Activated CD4-positive, alpha-beta T cell treated with anti-CD3 and anti-CD28 coated beads, Interleukin-2, amount 10 ng/mL, durations not matched to agents 7 days and 5 days (primary cell): ENCODE measurements at regions of chr19 and their contacts with region 1.

Region 1: GRCh38 chr19:55301459-55302317 is 17.9 kb downstream of the BRSK1 start:
- DNase-seq: peak; percentile 95
- H3K4me3 Mint-ChIP-seq: peak overlapping the region; percentile 91
- H3K27ac Mint-ChIP-seq: peak overlapping the region; percentile 94
- H3K4me1 Mint-ChIP-seq: peaks cover 15% of the 10 kb centered on the region
- H3K27me3 Mint-ChIP-seq: peaks cover 3% of the 10 kb centered on the region

Region 2: GRCh38 chr19:55289117-55289796 is 12.4 kb before region 1 on chr19:
- CTCF ChIA-PET with region 1: interaction called, 28 read pairs
- POLR2A ChIA-PET with region 1: no interaction called
- DNase-seq: no peak
- H3K4me3 Mint-ChIP-seq: no peak overlapping the region
- H3K27ac Mint-ChIP-seq: no peak overlapping the region
- H3K4me1 Mint-ChIP-seq: peaks cover 10% of the 10 kb centered on the region
- H3K27me3 Mint-ChIP-seq: no peaks in the 10 kb centered on the region

Region 3: DNA sequence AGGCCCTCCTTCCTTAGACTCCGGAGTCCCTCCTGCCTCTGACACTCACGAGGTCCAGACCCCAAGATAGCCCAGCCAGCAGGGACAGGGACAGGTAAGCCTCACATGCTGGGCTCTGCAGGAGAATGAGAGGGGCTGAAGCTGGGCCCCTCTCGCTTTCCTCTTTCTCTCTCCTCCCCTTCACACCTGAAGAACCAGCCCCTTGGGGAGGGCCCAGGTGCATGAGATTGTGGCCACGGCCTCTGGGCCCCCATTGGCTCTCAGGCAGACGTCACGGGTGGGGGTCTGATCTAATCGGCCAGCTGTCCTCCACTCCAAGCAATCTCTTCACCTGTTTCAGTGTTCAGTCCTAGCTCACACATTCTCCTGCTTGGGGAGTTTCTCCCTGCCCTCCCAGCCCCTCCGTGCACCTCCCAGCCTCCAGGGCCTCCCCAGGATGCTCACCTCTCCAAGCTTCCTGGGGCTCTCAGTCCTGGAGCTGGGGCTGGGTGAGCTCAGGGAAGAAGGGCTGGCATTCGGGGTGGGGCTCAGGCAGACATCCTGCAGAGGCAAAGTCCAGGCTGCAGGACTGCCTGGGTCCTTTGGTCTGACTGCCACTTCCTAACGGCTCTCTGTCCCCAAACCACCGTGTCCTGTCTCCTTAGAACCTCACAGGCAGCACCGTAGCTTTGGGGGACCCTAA is 20.7 kb after region 1 on chr19:
- CTCF ChIA-PET with region 1: interaction called, 12 read pairs
- POLR2A ChIA-PET with region 1: no interaction called
- DNase-seq: no peak
- H3K4me3 Mint-ChIP-seq: no peak overlapping the region
- H3K27ac Mint-ChIP-seq: no peak overlapping the region
- H3K4me1 Mint-ChIP-seq: peaks cover 11% of the 10 kb centered on the region
- H3K27me3 Mint-ChIP-seq: peaks cover 14% of the 10 kb centered on the region